CD8-positive, alpha-beta T cell (primary cell): ENCODE measurements at regions of chr12 and their contacts with region 1.

Region 1: DNA sequence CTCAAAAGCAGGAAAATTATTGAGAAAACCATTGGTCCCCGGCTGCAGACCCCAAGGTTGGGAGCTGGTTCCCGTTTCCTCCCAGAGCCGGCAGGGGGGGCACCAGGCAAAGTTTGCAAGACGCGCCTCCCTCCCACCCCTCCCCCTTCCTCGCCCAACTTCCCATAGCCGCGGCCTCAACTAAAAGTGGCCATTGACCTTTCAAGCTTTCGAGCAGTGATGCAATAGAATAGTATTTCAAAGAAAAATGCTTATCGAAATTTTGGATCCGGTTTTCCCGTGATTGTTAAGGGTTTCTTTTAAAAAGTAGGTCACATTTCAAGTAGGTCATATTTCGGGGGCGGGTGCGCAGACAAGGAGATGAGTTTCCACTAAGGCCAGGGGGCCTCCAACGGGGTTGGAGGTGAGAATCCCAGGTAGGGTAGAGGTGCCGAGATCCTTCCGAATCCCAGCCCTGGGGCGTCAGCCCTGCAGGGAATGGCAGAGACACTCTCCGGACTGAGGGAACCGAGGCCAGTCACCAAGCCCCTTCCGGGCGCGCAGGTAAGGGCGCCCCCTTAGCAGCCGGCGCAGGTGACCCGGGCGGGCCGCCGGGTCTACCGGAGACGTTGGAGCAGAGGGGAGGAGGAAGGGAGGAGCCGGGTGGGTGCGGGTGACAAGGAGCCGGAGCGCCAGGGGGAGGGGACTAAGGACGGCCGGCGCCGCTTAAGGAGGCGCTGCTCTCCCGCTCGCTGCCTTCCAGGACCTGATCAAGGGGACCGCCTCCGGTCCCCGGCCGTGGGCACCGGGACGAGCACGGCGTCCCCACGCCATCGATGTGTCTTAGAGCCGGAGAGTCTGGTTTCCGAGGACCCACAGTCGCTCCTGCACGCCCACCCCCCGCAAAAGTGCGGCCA is 2.6 kb upstream of the SOCS2 start:
- DNase-seq: peak; percentile 39 to 86 (median 73)
- ATAC-seq: peak; percentile 47
- H3K4me3 ChIP-seq: peak overlapping the region; percentile 94 to 96
- H3K4me3 Mint-ChIP-seq: peak overlapping the region; percentile 93
- H3K27ac ChIP-seq: peak overlapping the region; percentile 72 to 79
- H3K27ac Mint-ChIP-seq: peak overlapping the region; percentile 90
- H3K4me1 ChIP-seq: peaks cover 17% of the 10 kb centered on the region
- H3K4me1 Mint-ChIP-seq: peaks cover 28% of the 10 kb centered on the region
- H3K27me3 ChIP-seq: no peaks in the 10 kb centered on the region
- H3K27me3 Mint-ChIP-seq: peaks cover 2% of the 10 kb centered on the region
- CTCF ChIP-seq: peak; percentile 64

Region 2: DNA sequence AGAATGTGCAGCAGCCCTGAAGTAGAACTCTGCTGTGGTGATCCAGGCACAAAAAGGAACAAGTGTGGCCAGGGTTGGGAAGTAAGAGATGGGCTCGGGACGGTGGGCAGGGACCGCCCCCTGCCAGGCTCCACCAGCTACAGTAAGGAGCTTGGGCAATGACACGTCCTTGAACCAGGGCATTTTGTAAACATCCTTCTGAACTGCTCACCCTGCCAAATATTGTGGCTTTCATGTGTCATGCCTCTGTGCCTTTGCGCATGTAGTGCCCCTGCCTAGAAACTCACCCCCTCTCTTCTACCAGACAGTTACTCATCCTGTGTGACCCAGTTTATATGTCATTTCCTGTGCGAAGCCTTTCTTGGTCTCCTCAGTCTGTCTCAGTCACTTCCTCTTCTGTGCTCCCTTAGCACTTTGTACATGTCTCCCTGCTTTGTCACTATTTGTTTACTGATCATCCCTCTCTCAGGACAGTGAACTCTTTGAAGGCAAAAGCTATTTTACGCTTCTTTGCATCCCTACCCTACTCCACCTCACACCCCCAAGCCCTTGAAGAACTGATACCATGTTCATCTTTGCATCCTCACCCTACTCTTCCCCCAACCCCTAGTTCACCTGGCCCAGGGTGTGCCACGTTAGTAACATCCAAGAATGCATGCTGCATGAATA is 976.0 kb before region 1 on chr12:
- CTCF ChIA-PET with region 1: no interaction called
- POLR2A ChIA-PET with region 1: no interaction called
- intact Hi-C with region 1: loop called in 1 of 2 experiments (anchors 10 kb)
- DNase-seq: peak; percentile 66 to 98 (median 77)
- ATAC-seq: peak; percentile 85
- H3K4me3 ChIP-seq: no peak overlapping the region
- H3K4me3 Mint-ChIP-seq: peak overlapping the region; percentile 44
- H3K27ac ChIP-seq: peak overlapping the region; percentile 73 to 99
- H3K27ac Mint-ChIP-seq: peak overlapping the region; percentile 98
- H3K4me1 ChIP-seq: peaks cover 26% of the 10 kb centered on the region
- H3K4me1 Mint-ChIP-seq: peaks cover 39% of the 10 kb centered on the region
- H3K27me3 ChIP-seq: no peaks in the 10 kb centered on the region
- H3K27me3 Mint-ChIP-seq: no peaks in the 10 kb centered on the region
- CTCF ChIP-seq: no peak

Region 3: DNA sequence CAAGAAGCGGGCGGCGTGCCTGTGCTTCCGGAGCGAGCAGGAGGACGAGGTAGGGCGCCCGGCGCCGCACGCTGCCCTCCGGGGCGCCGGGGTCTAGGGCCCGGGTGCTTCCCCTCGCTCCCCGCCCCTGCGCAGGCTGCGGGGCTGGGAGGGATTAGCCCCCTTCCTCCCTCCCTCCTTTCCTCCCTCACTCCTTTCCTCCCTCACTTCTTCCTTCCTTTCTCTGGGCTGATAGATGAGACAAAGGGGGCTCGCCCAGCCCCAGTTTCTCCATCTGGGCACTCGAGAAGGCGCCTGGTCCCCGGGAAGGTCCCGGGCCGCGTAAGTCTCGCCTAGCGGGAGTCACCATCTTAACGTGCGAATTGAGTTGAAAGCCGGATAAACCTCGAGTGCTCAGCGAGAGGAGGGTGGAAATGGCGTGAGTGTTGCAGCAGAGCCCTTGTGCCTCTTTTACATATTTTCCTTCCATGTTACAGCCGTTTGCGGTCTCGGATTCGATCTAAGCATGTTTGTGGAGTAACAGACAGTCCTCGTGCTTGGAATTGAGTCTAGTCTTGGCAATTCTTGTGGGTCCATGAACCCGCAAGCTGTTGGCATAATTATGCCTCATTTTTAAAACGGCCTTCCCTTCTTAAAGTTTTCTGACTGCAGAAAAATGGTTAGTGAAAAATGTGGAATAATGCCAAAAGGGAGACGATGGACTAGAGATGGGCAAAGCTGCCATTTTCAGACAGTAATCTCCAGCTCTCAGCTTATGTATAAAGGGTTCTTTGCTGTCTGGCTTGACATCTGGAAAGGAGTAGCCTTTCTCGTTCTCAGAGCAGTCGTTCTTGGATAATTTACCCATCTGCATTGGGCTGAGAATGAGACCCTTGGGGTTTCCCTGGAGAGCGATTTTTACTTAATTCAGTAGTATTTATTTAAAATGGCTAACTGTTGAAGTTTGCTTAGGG is 191.3 kb before region 1 on chr12:
- CTCF ChIA-PET with region 1: no interaction called
- POLR2A ChIA-PET with region 1: no interaction called
- intact Hi-C with region 1: loop called (anchors 5 to 10 kb)
- DNase-seq: peak; percentile 18 to 85 (median 57)
- ATAC-seq: peak; percentile 54
- H3K4me3 ChIP-seq: peak overlapping the region; percentile 72 to 87
- H3K4me3 Mint-ChIP-seq: peak overlapping the region; percentile 99
- H3K27ac ChIP-seq: peak overlapping the region; percentile 77 to 81
- H3K27ac Mint-ChIP-seq: peak overlapping the region; percentile 99
- H3K4me1 ChIP-seq: peaks cover 23% of the 10 kb centered on the region
- H3K4me1 Mint-ChIP-seq: peaks cover 44% of the 10 kb centered on the region
- H3K27me3 ChIP-seq: no peaks in the 10 kb centered on the region
- H3K27me3 Mint-ChIP-seq: no peaks in the 10 kb centered on the region
- CTCF ChIP-seq: no peak

Region 4: DNA sequence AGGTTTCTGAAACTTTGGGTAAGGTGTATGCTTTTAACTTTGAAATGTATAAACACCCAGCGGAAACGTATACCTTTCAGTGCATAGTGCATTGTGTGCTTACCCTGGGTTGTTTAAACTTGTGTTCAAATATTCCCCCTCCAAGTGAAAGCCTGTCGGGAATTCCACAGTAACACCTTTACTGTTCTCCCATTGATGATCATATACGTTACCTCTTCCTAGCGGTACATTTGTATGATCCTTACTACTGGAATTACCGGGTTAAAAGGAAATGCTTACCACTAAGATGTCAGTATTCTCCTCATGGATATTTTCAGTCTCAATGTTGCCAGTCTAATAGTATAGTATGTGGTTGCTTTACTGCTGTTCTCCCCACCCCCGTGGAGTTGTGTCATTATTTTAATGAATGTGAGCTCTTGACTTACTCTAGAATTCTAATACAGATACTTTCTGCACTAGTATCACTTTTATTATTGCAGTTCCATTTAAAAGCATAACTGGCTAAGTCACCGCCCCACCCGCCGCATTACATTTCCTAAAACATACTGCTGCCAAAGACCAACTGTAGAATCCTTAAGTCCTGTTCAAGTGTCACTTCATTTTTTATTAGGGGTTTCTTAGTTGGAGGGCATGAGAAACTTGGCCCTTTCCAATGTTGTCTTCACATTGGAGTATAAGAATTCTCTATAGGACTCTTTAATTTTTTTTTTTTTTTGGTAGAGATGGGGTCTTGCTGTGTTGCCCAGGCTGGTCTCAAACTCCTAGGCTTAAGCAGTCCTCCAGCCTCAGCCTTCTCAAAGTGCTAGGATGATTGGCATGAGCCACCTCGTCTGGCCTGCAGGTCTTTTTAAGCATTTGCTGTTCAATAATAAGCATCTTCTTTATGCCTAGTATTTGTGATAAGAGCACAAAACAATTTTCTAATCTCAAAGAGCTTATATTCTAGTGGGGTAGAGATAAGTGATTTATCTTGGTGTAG is 167.3 kb before region 1 on chr12:
- CTCF ChIA-PET with region 1: no interaction called
- POLR2A ChIA-PET with region 1: no interaction called
- intact Hi-C with region 1: no loop called
- DNase-seq: no peak
- ATAC-seq: no peak
- H3K4me3 ChIP-seq: no peak overlapping the region
- H3K4me3 Mint-ChIP-seq: no peak overlapping the region
- H3K27ac ChIP-seq: no peak overlapping the region
- H3K27ac Mint-ChIP-seq: no peak overlapping the region
- H3K4me1 ChIP-seq: no peaks in the 10 kb centered on the region
- H3K4me1 Mint-ChIP-seq: no peaks in the 10 kb centered on the region
- H3K27me3 ChIP-seq: no peaks in the 10 kb centered on the region
- H3K27me3 Mint-ChIP-seq: no peaks in the 10 kb centered on the region
- CTCF ChIP-seq: no peak

Region 5: DNA sequence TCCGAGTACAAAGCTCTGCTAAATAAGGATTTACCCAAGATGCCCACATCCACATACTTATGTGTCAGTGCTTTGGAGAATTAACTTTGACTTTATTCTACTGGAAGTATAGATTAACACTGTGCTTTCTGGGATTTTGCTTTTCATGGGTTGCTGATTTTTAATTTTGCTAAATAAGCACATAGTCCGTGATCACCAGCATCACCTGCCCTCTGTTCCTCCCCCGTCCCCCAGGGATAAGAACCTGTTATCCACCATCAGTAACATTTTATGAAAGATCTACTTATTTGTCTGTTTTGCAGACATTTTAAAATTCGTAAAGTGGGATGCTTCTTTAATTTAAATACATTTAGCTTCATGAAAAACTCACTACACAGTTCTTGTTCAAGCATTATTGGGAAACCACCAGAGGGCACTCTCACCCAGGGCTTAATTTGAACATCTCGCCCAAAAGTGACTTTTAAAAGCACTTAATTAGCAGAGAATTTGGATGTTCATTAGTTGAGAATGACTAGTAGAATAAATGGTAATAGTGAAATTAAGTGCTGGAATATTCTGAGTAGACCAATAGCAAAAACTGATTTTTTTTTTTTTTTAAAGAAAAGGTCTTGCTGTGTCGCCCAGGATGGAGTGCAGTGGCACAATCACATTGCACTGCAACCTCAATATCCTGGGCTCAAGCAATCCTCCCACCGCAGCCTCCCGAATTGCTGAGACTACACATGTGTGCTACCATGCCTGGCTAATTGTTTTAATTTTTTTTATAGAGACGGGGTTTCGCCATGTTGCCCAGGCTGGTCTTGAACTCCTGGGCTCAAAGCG is 66.9 kb before region 1 on chr12:
- CTCF ChIA-PET with region 1: interaction called, 6 read pairs
- POLR2A ChIA-PET with region 1: no interaction called
- intact Hi-C with region 1: loop called (anchors 2 to 5 kb)
- DNase-seq: peak; percentile 34 to 72 (median 64)
- ATAC-seq: peak; percentile 36
- H3K4me3 ChIP-seq: no peak overlapping the region
- H3K4me3 Mint-ChIP-seq: no peak overlapping the region
- H3K27ac ChIP-seq: no peak overlapping the region
- H3K27ac Mint-ChIP-seq: no peak overlapping the region
- H3K4me1 ChIP-seq: no peaks in the 10 kb centered on the region
- H3K4me1 Mint-ChIP-seq: no peaks in the 10 kb centered on the region
- H3K27me3 ChIP-seq: no peaks in the 10 kb centered on the region
- H3K27me3 Mint-ChIP-seq: no peaks in the 10 kb centered on the region
- CTCF ChIP-seq: peak; percentile 95

Region 6: GRCh38 chr12:93766796-93767523 is 197.1 kb after region 1 on chr12:
- CTCF ChIA-PET with region 1: interaction called, 5 read pairs
- POLR2A ChIA-PET with region 1: no interaction called
- intact Hi-C with region 1: loop called in 1 of 2 experiments (anchors 5 kb)
- DNase-seq: peak in 5 of 9 experiments; percentile 9 to 63 (median 43)
- ATAC-seq: peak; percentile 75
- H3K4me3 ChIP-seq: no peak overlapping the region
- H3K4me3 Mint-ChIP-seq: no peak overlapping the region
- H3K27ac ChIP-seq: peak overlapping the region in 1 of 2 experiments; percentile 17
- H3K27ac Mint-ChIP-seq: no peak overlapping the region
- H3K4me1 ChIP-seq: peaks cover 7% of the 10 kb centered on the region
- H3K4me1 Mint-ChIP-seq: peaks cover 23% of the 10 kb centered on the region
- H3K27me3 ChIP-seq: no peaks in the 10 kb centered on the region
- H3K27me3 Mint-ChIP-seq: no peaks in the 10 kb centered on the region
- CTCF ChIP-seq: peak; percentile 58

Region 7: DNA sequence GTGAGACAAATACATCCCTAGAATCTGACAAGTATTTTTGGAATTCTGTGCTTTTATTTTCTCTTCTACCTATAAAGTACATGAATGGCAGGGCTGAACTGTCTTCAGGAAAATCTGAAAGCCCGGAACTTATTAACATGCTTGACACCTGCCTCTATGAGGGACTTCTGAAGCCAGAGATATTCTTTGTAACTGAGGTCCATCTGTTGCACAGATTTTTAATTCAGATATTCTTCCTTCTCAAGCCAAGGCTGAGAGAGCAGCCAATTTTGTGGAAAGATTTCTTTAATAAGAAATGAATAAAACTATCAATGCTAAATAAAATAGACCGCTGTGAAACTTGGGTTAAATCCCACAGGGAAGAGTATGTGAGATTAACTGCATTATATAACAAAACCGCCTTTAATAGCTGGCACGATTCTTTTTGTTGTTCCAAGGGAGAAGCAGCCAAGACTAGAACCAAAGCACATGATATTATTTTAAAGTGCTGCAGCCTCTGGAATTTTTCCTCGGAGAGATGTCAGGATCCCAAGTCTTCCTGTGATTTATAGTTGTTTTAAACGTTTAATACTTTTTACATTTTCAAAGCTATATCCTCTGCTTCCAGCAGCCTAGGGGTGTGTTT is 256.1 kb after region 1 on chr12:
- CTCF ChIA-PET with region 1: no interaction called
- POLR2A ChIA-PET with region 1: no interaction called
- intact Hi-C with region 1: no loop called
- DNase-seq: no peak
- ATAC-seq: no peak
- H3K4me3 ChIP-seq: no peak overlapping the region
- H3K4me3 Mint-ChIP-seq: no peak overlapping the region
- H3K27ac ChIP-seq: no peak overlapping the region
- H3K27ac Mint-ChIP-seq: no peak overlapping the region
- H3K4me1 ChIP-seq: no peaks in the 10 kb centered on the region
- H3K4me1 Mint-ChIP-seq: no peaks in the 10 kb centered on the region
- H3K27me3 ChIP-seq: no peaks in the 10 kb centered on the region
- H3K27me3 Mint-ChIP-seq: no peaks in the 10 kb centered on the region
- CTCF ChIP-seq: no peak

Region 8: GRCh38 chr12:94207849-94208621 is 638.1 kb after region 1 on chr12:
- CTCF ChIA-PET with region 1: no interaction called
- POLR2A ChIA-PET with region 1: no interaction called
- intact Hi-C with region 1: no loop called
- DNase-seq: peak in 6 of 9 experiments; percentile 11 to 73 (median 42)
- ATAC-seq: peak; percentile 83
- H3K4me3 ChIP-seq: peak overlapping the region; percentile 36
- H3K4me3 Mint-ChIP-seq: peak overlapping the region; percentile 79
- H3K27ac ChIP-seq: peak overlapping the region; percentile 48 to 82
- H3K27ac Mint-ChIP-seq: peak overlapping the region; percentile 94
- H3K4me1 ChIP-seq: peaks cover 50% of the 10 kb centered on the region
- H3K4me1 Mint-ChIP-seq: peaks cover 56% of the 10 kb centered on the region
- H3K27me3 ChIP-seq: no peaks in the 10 kb centered on the region
- H3K27me3 Mint-ChIP-seq: no peaks in the 10 kb centered on the region
- CTCF ChIP-seq: no peak

Region 9: DNA sequence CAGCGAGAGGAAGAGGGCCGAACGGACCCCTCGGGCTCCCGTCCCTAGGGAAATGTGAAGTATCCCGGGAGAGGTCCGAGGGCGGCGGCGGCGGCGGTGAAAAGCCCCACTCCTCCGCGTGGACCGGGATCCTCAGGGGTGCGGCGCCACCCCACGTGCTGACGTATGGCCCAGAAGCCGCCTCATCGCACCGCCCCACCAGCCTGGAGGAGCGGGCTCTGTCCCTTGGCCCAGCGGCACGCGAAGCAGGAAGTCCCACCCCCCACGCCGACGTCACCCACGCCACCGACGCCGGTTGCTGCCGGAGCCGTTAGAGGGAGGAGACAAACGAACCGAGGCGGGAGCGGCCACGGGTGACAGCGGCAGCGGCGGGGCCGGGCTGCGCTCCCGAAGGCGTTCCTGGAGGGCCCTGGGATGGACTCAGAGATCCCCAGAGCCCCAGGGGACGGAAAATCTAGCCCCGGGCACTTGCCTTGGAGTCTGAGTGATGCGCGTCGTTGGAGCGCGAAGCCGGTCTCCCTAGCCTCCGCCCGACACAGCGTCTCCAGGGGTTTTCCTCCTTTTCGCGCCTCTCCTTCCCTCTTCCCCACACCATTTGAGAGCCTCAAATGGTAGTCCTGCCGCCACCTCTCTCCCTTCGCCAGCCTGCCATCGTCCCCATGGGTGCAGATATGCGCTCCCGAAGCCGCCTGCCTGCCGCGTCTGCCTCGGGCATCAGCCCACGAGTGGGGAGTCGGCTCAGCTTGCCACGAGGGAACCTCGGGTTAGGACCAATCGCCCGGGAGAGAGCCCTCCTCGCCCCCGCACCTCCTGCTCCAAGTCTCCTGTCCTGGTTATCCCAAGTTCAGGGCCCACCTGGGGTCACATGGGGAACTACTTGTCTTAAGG is 890.1 kb after region 1 on chr12 and contains the start of gene CEP83:
- CTCF ChIA-PET with region 1: no interaction called
- POLR2A ChIA-PET with region 1: no interaction called
- intact Hi-C with region 1: loop called (anchors 1 to 5 kb)
- DNase-seq: peak; percentile 90 to 98 (median 97)
- ATAC-seq: peak; percentile 96
- H3K4me3 ChIP-seq: peak within 1 kb of the TSS; percentile 94 to 96
- H3K4me3 Mint-ChIP-seq: peak within 1 kb of the TSS; percentile 96
- H3K27ac ChIP-seq: peak within 1 kb of the TSS; percentile 91 to 93
- H3K27ac Mint-ChIP-seq: peak within 1 kb of the TSS; percentile 94
- H3K4me1 ChIP-seq: peaks cover 6% of the 10 kb centered on the region
- H3K4me1 Mint-ChIP-seq: peaks cover 33% of the 10 kb centered on the region
- H3K27me3 ChIP-seq: peaks cover 0 to 2% of the 10 kb centered on the region in 2 experiments
- H3K27me3 Mint-ChIP-seq: peaks cover 5% of the 10 kb centered on the region
- CTCF ChIP-seq: no peak
- total RNA-seq, gene CEP83: 9.7 to 11.2 TPM